Activated CD4-positive, alpha-beta T cell treated with anti-CD3 and anti-CD28 coated beads for 36 hours (primary cell): ENCODE measurements at regions of chr4 and their contacts with region 1.

Region 1: GRCh38 chr4:48779998-48780742 is at the start of gene FRYL:
- DNase-seq: peak; percentile 99
- ATAC-seq: peak; percentile 93
- H3K4me3 Mint-ChIP-seq: peak within 1 kb of the TSS; percentile 98
- H3K27ac Mint-ChIP-seq: peak within 1 kb of the TSS; percentile 98
- H3K4me1 Mint-ChIP-seq: peaks cover 42% of the 10 kb centered on the region
- H3K27me3 Mint-ChIP-seq: no peaks in the 10 kb centered on the region
- total RNA-seq, gene FRYL: 67.9 to 69.8 TPM

Region 2: GRCh38 chr4:47914220-47914925 is 865.8 kb before region 1 on chr4 and contains the start of gene NFXL1:
- CTCF ChIA-PET with region 1: no interaction called
- POLR2A ChIA-PET with region 1: no interaction called
- intact Hi-C with region 1: loop called in 1 of 2 experiments (anchors 1 kb)
- DNase-seq: peak; percentile 98
- ATAC-seq: peak; percentile 97
- H3K4me3 Mint-ChIP-seq: peak within 1 kb of the TSS; percentile 94
- H3K27ac Mint-ChIP-seq: peak within 1 kb of the TSS; percentile 90
- H3K4me1 Mint-ChIP-seq: peaks cover 25% of the 10 kb centered on the region
- H3K27me3 Mint-ChIP-seq: no peaks in the 10 kb centered on the region
- total RNA-seq, gene NFXL1: 12.6 to 14.4 TPM

Region 3: DNA sequence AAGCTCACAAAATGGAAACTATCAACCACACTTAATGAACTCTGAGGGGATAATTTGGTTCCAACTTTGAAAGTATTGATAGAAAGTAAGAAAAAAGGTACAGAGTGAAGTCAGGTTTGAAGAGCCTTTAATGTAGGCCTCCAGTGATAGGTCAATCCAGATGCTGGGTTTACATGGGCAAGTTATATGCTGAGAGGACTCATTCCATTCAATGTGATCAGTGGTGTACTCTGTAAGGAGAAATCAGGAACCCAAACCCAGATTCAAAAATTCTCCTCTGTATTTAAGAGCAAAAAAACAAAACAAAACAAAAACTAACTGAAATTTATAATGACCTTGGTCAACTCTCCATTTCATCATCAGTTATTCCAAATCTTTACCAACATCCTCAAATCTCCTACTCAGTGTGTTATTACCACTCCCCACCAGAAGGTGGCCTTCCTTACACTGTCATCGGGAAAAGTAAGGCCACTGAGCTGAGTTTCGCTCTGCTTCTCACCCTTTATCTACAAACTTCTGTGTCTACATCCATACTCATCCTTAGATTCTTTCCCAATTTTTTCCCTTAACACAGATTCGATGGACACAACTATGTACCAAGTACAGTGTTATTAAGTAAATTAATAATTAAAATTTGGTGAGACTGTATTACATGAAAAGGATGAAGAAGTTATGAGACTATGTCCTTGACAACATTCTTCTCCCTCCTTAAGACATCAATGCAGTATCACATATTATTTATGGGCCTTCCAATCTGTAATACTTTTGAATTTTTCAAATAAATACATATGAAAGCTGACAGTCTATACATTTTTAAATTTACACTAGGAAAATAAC is 201.8 kb before region 1 on chr4:
- CTCF ChIA-PET with region 1: interaction called, 12 read pairs
- POLR2A ChIA-PET with region 1: interaction called, 3 read pairs
- intact Hi-C with region 1: loop called (anchors 2 to 5 kb)
- DNase-seq: peak; percentile 63
- ATAC-seq: peak; percentile 78
- H3K4me3 Mint-ChIP-seq: no peak overlapping the region
- H3K27ac Mint-ChIP-seq: no peak overlapping the region
- H3K4me1 Mint-ChIP-seq: peaks cover 4% of the 10 kb centered on the region
- H3K27me3 Mint-ChIP-seq: no peaks in the 10 kb centered on the region

Region 4: GRCh38 chr4:48698029-48698971 is 81.9 kb before region 1 on chr4:
- CTCF ChIA-PET with region 1: interaction called, 4 read pairs
- POLR2A ChIA-PET with region 1: no interaction called
- intact Hi-C with region 1: loop called in 1 of 2 experiments (anchors 2 kb)
- DNase-seq: no peak
- ATAC-seq: no peak
- H3K4me3 Mint-ChIP-seq: no peak overlapping the region
- H3K27ac Mint-ChIP-seq: no peak overlapping the region
- H3K4me1 Mint-ChIP-seq: peaks cover 59% of the 10 kb centered on the region
- H3K27me3 Mint-ChIP-seq: no peaks in the 10 kb centered on the region

Region 5: DNA sequence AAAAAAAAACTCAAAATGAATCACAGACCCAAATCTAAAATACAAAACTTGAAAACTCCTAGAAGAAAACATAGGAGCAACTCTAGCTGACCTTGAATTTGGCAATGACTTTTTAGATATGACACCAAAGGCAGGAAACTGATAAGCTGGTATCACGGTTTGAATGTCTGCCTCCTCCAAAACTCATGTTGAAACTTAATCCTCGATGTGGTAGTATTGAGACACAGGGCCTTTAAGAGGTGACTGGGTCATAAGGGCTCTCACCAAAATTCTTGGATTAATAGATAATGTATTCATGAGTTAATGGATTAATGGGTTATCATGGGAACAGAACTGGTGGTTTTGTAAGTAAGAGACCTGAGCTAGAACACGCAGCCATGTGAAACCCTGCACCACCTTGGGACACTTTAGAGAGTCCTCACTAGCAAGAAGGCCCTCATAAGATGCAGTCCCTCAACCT is 40.6 kb before region 1 on chr4:
- CTCF ChIA-PET with region 1: interaction called, 3 read pairs
- POLR2A ChIA-PET with region 1: no interaction called
- intact Hi-C with region 1: loop called in 1 of 2 experiments (anchors 5 kb)
- DNase-seq: no peak
- ATAC-seq: peak; percentile 80
- H3K4me3 Mint-ChIP-seq: no peak overlapping the region
- H3K27ac Mint-ChIP-seq: peak overlapping the region; percentile 39
- H3K4me1 Mint-ChIP-seq: peaks cover 77% of the 10 kb centered on the region
- H3K27me3 Mint-ChIP-seq: no peaks in the 10 kb centered on the region

Region 6: GRCh38 chr4:48963042-48963679 is 183.0 kb after region 1 on chr4:
- CTCF ChIA-PET with region 1: interaction called, 7 read pairs
- POLR2A ChIA-PET with region 1: no interaction called
- intact Hi-C with region 1: loop called in 1 of 2 experiments (anchors 10 kb)
- DNase-seq: peak; percentile 86
- ATAC-seq: peak; percentile 89
- H3K4me3 Mint-ChIP-seq: no peak overlapping the region
- H3K27ac Mint-ChIP-seq: no peak overlapping the region
- H3K4me1 Mint-ChIP-seq: no peaks in the 10 kb centered on the region
- H3K27me3 Mint-ChIP-seq: no peaks in the 10 kb centered on the region